Head of caudate nucleus (tissue), 42 donors: ENCODE measurements at regions of chr6 and their contacts with region 1.

Region 1: GRCh38 chr6:138278326-138278725 is 60.0 kb upstream of the PBOV1 start:
- DNase-seq: peak; percentile 42 to 88 (median 74)

Region 2: DNA sequence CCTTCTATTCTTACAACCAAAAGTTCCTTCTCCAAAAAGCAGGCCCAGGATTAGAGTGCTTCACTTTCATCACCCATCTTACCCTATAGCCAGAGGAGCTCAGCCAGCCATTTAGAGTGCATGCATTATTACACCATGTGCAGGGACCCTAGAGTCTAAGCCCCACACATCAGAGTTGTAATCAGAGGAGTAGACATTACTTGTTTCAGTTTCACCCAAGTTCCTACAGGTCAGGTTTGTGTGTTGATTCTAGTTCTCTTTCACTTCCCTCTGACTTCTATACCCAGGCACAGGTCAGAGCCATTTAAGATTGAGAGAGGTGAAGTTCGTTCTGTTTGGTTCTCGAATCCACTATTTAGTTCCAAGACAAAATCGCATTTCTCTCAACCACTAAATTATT is 132.9 kb before region 1 on chr6:
- intact Hi-C with region 1: no loop called
- DNase-seq: no peak

Region 3: GRCh38 chr6:138161338-138162110 is 116.8 kb before region 1 on chr6 and contains the start of gene ARFGEF3:
- intact Hi-C with region 1: loop called (anchors 5 kb)
- DNase-seq: peak in 41 of 42 donors; percentile 45 to 90 (median 79)

Region 4: GRCh38 chr6:138188278-138188941 is 89.9 kb before region 1 on chr6:
- intact Hi-C with region 1: no loop called
- DNase-seq: peak in 17 of 42 donors; percentile 17 to 67 (median 42)